ENCODE measurements at regions of chr3 and their contacts with region 1.

Region 1: DNA sequence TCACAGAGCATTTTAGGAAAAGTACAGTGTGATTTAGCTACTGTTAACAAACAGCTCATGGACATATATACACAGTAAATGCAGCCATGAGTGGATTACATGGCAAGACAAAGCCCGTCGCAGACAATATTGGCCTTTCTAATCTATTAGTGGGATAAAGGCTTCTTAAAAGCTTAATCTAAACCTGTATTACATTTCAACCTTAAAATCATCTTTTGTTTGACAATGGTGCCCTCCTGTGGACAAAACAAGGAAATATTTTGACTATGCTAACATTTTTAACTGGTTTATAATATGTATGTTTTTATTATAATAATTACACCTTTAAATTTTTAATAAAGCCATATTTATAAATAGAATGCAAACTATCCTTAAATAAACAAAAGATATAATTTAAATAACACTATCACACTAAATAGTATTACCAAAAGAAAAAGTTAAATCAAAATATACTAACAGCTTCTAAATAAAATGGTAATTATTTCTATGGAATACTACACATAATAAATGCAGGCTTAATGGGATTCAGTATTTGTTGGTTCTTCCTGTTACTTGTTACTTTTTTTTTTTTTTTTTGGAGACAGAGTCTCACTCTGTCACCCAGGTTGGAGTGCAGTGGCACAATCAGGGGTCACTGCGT is 38.6 kb downstream of the TAFA4 start:
- DNase-seq: no peak

Region 2: DNA sequence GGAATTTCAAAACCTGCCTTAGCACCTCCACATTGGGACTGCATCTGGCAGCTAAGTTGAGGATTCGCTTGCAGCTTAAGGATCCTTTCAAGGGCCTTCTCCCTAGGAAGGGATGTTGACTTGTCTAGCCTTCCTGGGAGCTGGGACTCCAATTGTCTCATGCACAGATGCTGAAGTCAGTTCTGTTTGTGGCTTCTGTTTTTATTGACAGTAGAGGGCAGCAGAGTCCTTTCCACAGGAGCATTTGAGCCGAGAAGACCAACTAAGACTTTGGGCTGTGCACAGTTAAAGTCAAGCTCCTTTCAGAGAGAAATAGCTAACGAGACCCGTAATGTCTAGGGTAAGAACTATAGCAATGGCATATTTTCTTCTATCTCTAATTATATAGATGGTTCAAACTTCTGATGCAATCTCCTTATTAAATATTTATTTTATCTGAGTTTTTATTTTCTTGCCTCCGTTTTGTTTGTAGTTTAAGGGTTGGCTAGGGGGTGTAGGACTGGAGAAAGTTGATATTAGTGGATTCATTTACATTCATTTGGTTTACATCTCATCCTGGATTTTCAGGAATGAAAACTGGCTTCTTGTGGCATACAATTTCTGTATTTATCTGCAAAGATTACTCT is 1955.3 kb before region 1 on chr3:
- intact Hi-C with region 1: loop called (anchors 5 kb)
- DNase-seq: no peak

Measured in cardiac septum (tissue), 1 donor.